Posterior vena cava (tissue), 2 donors: ENCODE measurements at regions of chr4 and their contacts with region 1.

Region 1: GRCh38 chr4:76949276-76950051 is at the start of gene SEPTIN11:
- DNase-seq: peak; percentile 98
- total RNA-seq, gene SEPTIN11: 140 to 154 TPM

Region 2: DNA sequence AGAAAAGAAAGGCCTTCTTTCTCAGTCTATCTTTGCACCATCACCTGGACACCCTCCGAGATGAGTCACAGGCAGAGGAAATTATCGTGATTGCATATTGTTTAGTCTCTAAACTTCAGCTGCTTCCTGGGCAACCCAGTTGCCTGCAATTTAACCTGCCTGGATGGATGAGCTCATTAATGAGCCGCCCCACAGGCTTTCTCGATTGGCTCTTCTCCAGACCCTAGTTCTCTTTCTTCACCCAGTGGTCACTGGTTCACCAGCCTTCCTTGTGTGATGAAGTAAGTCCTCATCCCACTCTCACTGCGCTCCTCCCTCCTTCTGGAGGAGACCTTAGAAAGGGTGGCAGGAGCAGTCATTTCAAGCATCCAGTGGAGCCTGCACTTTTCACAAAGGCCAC is 145.9 kb before region 1 on chr4:
- intact Hi-C with region 1: loop called in 1 of 2 experiments (anchors 10 kb)
- DNase-seq: no peak

Region 3: DNA sequence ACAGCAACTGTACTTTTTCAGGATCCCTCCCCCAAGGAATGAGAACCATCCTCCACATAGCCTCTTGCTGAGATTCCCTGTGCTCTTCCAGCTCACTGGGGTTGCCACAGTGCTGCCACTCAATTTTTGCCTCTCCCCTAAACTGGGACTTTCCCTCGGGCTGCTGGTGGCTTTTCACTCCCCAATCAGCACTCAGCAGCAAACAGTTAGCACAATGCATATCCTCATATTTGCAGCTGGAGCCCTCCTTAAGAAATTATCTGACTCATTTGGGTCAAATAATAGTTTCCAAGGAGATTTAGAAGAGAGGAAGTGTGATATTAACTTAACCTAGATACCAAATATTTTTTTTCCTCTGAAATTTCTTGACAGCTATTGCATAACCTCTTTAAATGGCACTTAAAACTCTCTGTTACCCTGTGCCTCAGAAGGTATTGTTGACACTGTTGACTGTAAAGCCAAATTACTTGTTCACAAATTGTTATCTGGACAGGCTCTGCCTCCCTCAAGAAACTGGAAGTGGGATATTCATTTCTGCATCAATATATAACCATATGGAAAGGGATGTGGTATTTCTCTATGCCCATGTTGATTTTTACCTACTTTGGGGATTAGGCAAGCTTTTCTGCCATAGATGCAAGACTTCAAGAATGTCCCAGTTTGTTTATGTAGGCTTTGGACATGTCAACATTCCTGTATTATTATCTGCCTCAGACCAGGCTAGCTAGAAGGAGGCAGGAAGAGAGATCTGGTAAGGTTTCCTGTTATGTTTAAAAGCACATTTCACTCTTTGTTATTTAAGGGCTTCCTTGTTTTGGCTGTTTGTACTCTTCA is 58.1 kb after region 1 on chr4:
- intact Hi-C with region 1: loop called in 1 of 2 experiments (anchors 10 kb)
- DNase-seq: no peak